Activated CD4-positive, alpha-beta T cell treated with anti-CD3 and anti-CD28 coated beads for 36 hours (primary cell): ENCODE measurements at regions of chr1 and their contacts with region 1.

Region 1: GRCh38 chr1:212035123-212035834 is at the starts of genes DTL and INTS7:
- DNase-seq: peak; percentile 99
- ATAC-seq: peak; percentile 83
- H3K4me3 Mint-ChIP-seq: peak within 1 kb of the TSS; percentile 85
- H3K27ac Mint-ChIP-seq: peak within 1 kb of the TSS; percentile 100
- H3K4me1 Mint-ChIP-seq: peaks cover 56% of the 10 kb centered on the region
- H3K27me3 Mint-ChIP-seq: no peaks in the 10 kb centered on the region
- total RNA-seq, gene DTL: 82.1 to 114 TPM
- total RNA-seq, gene INTS7: 23.7 to 28.6 TPM

Region 2: GRCh38 chr1:211382714-211383480 is 652.4 kb before region 1 on chr1:
- CTCF ChIA-PET with region 1: no interaction called
- POLR2A ChIA-PET with region 1: no interaction called
- intact Hi-C with region 1: loop called in 1 of 2 experiments (anchors 10 kb)
- DNase-seq: peak; percentile 86
- ATAC-seq: peak; percentile 72
- H3K4me3 Mint-ChIP-seq: peak overlapping the region; percentile 88
- H3K27ac Mint-ChIP-seq: peak overlapping the region; percentile 98
- H3K4me1 Mint-ChIP-seq: peaks cover 47% of the 10 kb centered on the region
- H3K27me3 Mint-ChIP-seq: no peaks in the 10 kb centered on the region

Region 3: GRCh38 chr1:211698161-211699026 is 336.9 kb before region 1 on chr1:
- CTCF ChIA-PET with region 1: interaction called, 10 read pairs
- POLR2A ChIA-PET with region 1: no interaction called
- intact Hi-C with region 1: loop called (anchors 1 to 5 kb)
- DNase-seq: peak; percentile 92
- ATAC-seq: peak; percentile 98
- H3K4me3 Mint-ChIP-seq: no peak overlapping the region
- H3K27ac Mint-ChIP-seq: no peak overlapping the region
- H3K4me1 Mint-ChIP-seq: peaks cover 9% of the 10 kb centered on the region
- H3K27me3 Mint-ChIP-seq: no peaks in the 10 kb centered on the region

Region 4: DNA sequence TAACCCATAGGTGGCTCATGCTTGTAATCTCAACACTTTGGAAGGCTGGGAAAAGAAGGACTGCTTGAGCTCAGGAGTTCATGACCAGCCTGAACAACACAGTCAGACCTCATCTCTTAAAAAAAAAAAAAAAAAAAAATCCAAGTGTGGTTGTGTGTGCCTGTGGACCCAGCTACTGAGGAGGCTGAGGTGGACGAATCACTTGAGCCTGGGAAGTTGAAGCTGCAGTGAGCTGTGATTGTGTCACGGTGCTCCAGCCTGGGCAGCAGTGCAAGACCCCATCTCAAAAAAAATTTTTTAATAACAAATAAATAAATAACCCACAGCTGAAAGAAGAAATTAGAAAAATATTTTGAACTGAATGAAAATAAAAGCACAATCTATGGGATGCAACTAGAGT is 13.7 kb before region 1 on chr1:
- CTCF ChIA-PET with region 1: interaction called, 18 read pairs
- POLR2A ChIA-PET with region 1: no interaction called
- intact Hi-C with region 1: no loop called
- DNase-seq: no peak
- ATAC-seq: no peak
- H3K4me3 Mint-ChIP-seq: no peak overlapping the region
- H3K27ac Mint-ChIP-seq: no peak overlapping the region
- H3K4me1 Mint-ChIP-seq: peaks cover 9% of the 10 kb centered on the region
- H3K27me3 Mint-ChIP-seq: no peaks in the 10 kb centered on the region

Region 5: DNA sequence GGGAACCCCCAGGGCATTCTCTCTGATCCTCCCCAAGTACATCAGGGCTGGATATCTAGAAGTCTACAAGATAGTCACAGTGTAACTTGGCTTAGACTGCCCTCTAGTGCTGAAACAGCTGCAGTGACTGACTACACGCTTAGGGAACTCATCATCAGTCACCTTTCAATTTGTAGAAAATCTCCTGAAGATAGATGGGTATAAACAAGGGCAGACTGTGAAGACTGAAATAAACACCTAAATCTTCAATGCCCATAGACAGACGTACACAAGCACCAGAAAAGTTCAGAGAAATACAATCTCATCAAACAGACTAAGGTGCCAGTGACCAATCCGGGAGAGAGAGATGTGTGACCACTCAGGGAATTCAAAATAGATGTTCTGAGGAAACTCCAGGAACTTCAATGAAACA is 332.8 kb after region 1 on chr1:
- CTCF ChIA-PET with region 1: interaction called, 3 read pairs
- POLR2A ChIA-PET with region 1: no interaction called
- intact Hi-C with region 1: loop called in 1 of 2 experiments (anchors 1 kb)
- DNase-seq: peak; percentile 67
- ATAC-seq: peak; percentile 98
- H3K4me3 Mint-ChIP-seq: no peak overlapping the region
- H3K27ac Mint-ChIP-seq: no peak overlapping the region
- H3K4me1 Mint-ChIP-seq: no peaks in the 10 kb centered on the region
- H3K27me3 Mint-ChIP-seq: no peaks in the 10 kb centered on the region

Region 6: DNA sequence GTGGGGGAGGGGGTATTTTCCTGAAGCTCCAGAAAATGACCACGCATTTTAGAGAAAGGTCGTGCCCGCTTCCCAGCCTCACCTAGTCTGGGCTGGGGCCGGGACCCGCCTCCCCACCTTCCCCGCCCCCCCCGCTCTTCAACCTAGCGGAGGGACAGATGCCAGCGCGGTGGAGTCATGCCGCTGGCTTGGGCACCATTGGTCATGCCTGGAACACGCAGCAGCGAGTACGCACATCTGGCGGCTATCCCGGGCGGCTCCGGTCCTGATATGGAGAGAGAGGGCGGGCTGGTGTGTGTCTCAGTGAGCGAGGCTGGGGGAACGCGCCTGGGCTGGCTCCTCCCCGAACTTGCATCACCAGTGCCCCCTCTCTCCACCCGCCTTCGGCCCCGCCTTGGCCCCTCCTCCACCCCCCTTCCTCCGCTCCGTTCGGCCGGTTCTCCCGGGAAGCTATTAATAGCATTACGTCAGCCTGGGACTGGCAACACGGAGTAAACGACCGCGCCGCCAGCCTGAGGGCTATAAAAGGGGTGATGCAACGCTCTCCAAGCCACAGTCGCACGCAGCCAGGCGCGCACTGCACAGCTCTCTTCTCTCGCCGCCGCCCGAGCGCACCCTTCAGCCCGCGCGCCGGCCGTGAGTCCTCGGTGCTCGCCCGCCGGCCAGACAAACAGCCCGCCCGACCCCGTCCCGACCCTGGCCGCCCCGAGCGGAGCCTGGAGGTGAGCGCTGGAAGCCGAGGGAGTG is 573.1 kb after region 1 on chr1 and contains the start of gene ATF3:
- CTCF ChIA-PET with region 1: no interaction called
- POLR2A ChIA-PET with region 1: interaction called, 3 read pairs
- intact Hi-C with region 1: loop called in 1 of 2 experiments (anchors 5 kb)
- DNase-seq: peak; percentile 97
- ATAC-seq: peak; percentile 89
- H3K4me3 Mint-ChIP-seq: peak within 1 kb of the TSS; percentile 91
- H3K27ac Mint-ChIP-seq: peak within 1 kb of the TSS; percentile 96
- H3K4me1 Mint-ChIP-seq: peaks cover 56% of the 10 kb centered on the region
- H3K27me3 Mint-ChIP-seq: peaks cover 45% of the 10 kb centered on the region
- total RNA-seq, gene ATF3: 40.3 to 44.9 TPM